Prostate gland (tissue), 2 donors: ENCODE measurements at regions of chr1 and their contacts with region 1.

Region 1: DNA sequence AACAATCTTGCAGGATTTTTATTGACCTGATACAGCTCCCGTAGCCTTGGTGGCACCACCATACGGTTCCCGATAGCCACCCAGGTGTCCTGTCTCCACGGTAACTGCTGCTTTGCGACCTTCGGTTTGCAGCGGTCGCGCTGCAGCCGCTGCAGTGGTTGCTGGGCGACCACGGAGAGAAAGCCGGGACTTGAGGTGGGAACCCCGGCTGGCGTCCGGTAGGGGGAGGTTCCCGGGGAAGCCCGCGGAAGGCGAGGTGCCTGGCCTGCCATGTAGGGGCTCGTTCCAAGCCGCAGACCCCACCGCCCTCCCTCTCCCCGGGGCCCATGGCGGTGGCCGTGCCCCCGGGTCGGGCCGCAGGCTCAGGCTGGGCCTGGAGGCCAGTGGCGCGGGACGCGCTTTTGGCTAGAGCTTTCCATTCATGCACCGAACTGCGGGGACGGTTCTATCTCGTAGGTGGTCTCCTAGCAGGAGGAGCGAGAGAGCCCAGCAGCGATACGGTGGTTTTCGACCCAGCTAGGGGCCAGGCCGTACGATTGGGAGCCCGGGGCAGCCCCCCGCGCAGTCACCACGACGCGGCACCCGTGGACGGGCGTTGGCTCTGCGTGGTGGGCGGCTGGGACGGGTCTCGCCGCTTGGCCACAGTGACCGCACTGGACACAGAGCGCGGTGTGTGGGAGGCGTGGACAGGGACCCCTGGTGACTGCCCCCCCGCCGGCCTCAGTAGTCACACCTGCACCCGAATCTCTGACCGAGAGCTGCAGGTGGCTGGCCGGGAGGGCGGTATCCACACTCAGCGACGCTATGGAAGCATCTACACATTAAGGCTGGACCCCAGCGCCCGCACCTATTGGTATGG is at the start of gene KLHDC9:
- DNase-seq: peak; percentile 84
- H3K4me3 ChIP-seq: peak within 1 kb of the TSS; percentile 71 to 76
- H3K27ac ChIP-seq: peak within 1 kb of the TSS; percentile 57 to 67
- H3K4me1 ChIP-seq: no peaks in the 10 kb centered on the region
- H3K27me3 ChIP-seq: no peaks in the 10 kb centered on the region
- CTCF ChIP-seq: peak in 2 of 4 experiments; percentile 46 to 51
- POLR2A ChIP-seq: peak; percentile 31
- total RNA-seq, gene KLHDC9: 24.8 to 33.3 TPM

Region 2: GRCh38 chr1:160997323-160998038 is 101.0 kb before region 1 on chr1:
- intact Hi-C with region 1: loop called (anchors 5 kb)
- DNase-seq: peak; percentile 57
- H3K4me3 ChIP-seq: no peak overlapping the region
- H3K27ac ChIP-seq: peak overlapping the region in 1 of 2 donors; percentile 35
- H3K4me1 ChIP-seq: no peaks in the 10 kb centered on the region
- H3K27me3 ChIP-seq: no peaks in the 10 kb centered on the region
- CTCF ChIP-seq: peak in 3 of 4 experiments; percentile 41 to 68 (median 68)
- POLR2A ChIP-seq: no peak

Region 3: DNA sequence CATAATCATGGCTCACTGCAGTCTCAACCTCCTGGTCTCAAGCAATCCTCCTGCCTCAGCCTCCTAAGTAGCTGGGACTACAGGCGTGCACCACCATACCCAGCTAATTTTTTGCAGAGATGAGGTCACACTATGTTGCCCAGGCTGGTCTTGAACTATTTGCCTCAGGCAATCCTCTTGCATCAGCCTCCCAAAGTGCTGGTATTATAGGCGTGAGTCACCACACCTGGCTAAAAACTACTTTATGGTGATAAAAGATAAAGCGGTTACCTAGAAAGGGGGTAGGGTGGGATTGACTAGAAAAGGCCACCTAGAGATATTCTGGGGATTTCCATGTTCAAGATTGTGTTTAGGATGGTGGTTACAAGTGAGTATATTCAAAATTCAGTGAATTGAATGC is 64.7 kb before region 1 on chr1:
- intact Hi-C with region 1: no loop called
- DNase-seq: no peak
- H3K4me3 ChIP-seq: no peak overlapping the region
- H3K27ac ChIP-seq: no peak overlapping the region
- H3K4me1 ChIP-seq: no peaks in the 10 kb centered on the region
- H3K27me3 ChIP-seq: no peaks in the 10 kb centered on the region
- CTCF ChIP-seq: no peak
- POLR2A ChIP-seq: no peak

Region 4: GRCh38 chr1:161045750-161046571 is 52.5 kb before region 1 on chr1 and contains the start of gene USF1:
- intact Hi-C with region 1: loop called (anchors 5 kb)
- DNase-seq: peak; percentile 93
- H3K4me3 ChIP-seq: peak within 1 kb of the TSS; percentile 85 to 91
- H3K27ac ChIP-seq: peak within 1 kb of the TSS; percentile 86 to 95
- H3K4me1 ChIP-seq: peaks cover 3% of the 10 kb centered on the region
- H3K27me3 ChIP-seq: no peaks in the 10 kb centered on the region
- CTCF ChIP-seq: peak in 1 of 4 experiments; percentile 13
- POLR2A ChIP-seq: peak; percentile 83
- total RNA-seq, gene USF1: 46.3 to 65.8 TPM